ENCODE measurements at regions of chrX and their contacts with region 1.

Region 1: DNA sequence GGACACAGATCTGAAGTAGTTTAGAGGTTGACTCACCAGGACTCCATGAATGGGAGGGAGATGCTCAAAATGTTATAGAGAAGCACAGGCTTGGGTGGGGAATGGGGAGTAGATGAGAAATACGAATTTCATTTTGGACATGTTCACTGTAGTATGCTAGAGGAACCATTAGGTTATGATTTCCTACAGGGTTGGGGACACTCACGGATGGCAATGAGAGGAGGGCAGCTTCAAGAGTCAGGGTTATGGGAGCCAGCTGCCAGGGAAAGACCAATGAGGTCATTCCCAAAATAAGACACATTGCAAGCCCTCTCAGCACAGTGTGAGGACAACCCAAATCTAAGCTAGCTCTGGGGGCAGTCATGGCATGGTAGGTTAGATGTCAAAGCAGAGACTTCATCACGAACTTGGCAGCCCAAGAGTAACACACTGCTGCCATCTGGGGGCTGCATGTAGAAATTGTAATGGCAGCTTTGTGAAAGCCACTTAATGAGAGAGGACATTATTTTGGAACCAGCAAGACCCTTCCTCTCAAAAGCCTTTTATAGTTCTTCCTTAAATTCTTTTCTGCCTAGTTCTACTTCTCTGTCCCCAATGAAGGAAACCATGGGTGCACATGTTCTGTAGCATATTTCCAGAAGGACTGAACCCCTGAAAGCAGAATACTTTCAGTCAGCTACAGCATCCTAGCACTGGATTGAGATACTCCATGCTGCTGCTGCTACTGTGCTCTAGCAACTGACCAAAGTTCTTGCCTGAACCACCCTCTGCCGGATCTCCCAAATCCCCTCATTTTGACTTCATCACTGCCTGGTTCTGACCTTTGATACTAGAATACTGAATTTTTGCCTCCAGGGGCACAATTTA is 16.2 kb upstream of the ZCCHC12 start:
- DNase-seq: no peak
- H3K4me3 ChIP-seq: no peak overlapping the region
- H3K27ac ChIP-seq: no peak overlapping the region
- H3K27me3 ChIP-seq: no peaks in the 10 kb centered on the region
- CTCF ChIP-seq: peak; percentile 70

Region 2: GRCh38 chrX:118637997-118638396 is 169.4 kb before region 1 on chrX:
- CTCF ChIA-PET with region 1: interaction called, 70 read pairs
- POLR2A ChIA-PET with region 1: no interaction called
- DNase-seq: no peak
- H3K4me3 ChIP-seq: no peak overlapping the region
- H3K27ac ChIP-seq: no peak overlapping the region
- H3K27me3 ChIP-seq: no peaks in the 10 kb centered on the region
- CTCF ChIP-seq: peak; percentile 34; the same call in 1 of the 2 replicates

Region 3: DNA sequence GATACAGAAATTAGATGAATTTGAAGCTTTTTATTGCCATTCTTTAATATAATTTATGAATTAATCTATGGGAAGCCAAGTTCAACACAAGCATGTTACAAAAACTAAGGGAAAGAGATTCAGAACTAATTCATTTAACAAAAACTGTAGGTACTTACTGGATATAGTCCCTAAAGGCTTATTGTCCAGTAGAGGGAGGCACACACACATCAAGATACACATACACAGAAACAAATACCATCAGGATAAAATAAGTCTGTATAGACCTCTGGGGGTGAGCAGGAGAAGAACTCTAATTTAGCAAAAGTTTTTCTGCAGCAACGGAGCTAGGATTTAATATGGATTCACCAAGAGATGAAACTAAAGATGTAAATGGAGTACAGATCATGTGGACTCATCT is 163.0 kb before region 1 on chrX:
- CTCF ChIA-PET with region 1: interaction called, 70 read pairs
- POLR2A ChIA-PET with region 1: no interaction called
- DNase-seq: no peak
- H3K4me3 ChIP-seq: no peak overlapping the region
- H3K27ac ChIP-seq: no peak overlapping the region
- H3K27me3 ChIP-seq: no peaks in the 10 kb centered on the region
- CTCF ChIP-seq: peak; percentile 59

Measured in AG04450 (cell line).